ENCODE measurements at regions of chr1 and their contacts with region 1.

Region 1: DNA sequence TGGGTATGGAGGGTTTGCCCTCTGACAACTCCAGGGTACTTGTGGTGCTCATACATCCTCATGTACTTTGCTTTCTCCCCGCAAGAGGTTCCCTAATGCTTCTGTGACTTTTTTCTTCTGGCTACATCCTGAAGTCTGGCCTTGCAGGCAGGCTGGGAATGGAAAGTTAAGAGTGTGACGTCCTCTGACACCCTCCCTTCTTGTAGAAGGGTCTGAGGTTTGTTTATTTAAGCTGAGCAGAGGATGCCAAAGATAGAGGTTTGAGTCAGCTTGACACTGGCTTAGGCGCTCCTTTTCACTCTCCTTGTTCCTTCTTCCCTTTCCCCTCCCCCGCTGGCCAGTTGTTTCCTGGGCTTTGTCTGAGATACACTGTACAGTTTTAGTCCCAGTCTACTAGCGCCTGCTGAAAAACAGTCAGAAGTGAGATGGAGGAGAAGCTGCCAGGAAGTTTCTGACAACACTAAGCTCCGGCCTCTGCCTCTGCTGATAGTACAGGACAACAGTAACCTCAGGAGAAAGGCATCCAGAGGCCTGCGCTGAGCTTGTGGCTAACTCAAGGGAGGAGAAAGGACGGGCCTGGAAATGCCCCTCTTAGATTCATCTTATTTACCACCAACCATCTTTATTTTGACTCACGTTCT is at the start of gene MACF1:
- DNase-seq: peak; percentile 91
- total RNA-seq, gene MACF1: 596 to 609 TPM

Region 2: GRCh38 chr1:39167632-39168209 is 36.8 kb before region 1 on chr1:
- intact Hi-C with region 1: no loop called
- DNase-seq: no peak

Region 3: GRCh38 chr1:39239968-39240367 is 35.4 kb after region 1 on chr1:
- intact Hi-C with region 1: no loop called
- DNase-seq: no peak

Region 4: GRCh38 chr1:39258146-39258924 is 53.8 kb after region 1 on chr1:
- intact Hi-C with region 1: loop called in 1 of 2 experiments (anchors 5 kb)
- DNase-seq: no peak